Activated CD4-positive, alpha-beta T cell treated with anti-CD3 and anti-CD28 coated beads for 36 hours (primary cell): ENCODE measurements at regions of chr12 and their contacts with region 1.

Region 1: DNA sequence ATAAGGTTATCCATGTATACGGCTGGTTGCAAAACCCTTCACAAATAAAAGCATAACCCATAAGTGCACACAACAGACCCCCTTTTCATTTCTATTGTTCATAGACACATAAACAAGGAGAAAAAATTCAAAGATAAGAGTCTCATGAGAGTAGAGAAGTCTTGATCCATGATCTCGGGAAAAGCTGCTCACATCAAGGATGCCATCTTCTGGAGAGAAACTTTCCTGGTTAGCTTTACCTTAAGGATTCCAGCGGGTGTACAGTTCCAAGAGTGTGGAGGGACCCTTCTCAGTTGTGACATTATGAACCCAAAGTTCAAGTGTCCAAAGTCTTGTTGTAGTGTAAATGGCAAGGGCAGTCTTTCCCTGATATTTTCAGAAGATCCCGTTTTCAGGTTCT is 144.5 kb downstream of the LLPH start:
- DNase-seq: no peak
- ATAC-seq: no peak
- H3K4me3 Mint-ChIP-seq: no peak overlapping the region
- H3K27ac Mint-ChIP-seq: no peak overlapping the region
- H3K4me1 Mint-ChIP-seq: no peaks in the 10 kb centered on the region
- H3K27me3 Mint-ChIP-seq: peaks cover 5% of the 10 kb centered on the region

Region 2: DNA sequence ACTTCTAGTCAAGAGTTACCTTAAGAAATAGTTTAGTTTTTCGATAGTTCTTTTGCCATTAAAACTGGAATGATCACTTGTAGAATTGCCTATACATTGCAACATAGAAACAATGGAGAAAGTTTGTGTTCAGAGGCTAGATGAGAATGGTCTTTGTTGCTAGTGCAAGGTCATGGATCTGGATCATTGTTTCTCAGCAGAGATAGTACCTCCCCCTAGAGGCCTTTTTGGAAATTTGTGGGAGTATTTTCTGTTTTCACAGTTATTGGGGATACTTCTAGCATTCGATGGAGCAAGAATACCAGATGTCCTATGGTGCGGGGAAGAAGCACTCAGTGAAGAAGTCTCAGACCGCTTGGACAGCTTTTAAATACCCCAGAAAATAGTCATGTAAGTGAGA is 300.5 kb before region 1 on chr12:
- CTCF ChIA-PET with region 1: no interaction called
- POLR2A ChIA-PET with region 1: no interaction called
- intact Hi-C with region 1: no loop called
- DNase-seq: no peak
- ATAC-seq: no peak
- H3K4me3 Mint-ChIP-seq: no peak overlapping the region
- H3K27ac Mint-ChIP-seq: no peak overlapping the region
- H3K4me1 Mint-ChIP-seq: no peaks in the 10 kb centered on the region
- H3K27me3 Mint-ChIP-seq: peaks cover 25% of the 10 kb centered on the region

Region 3: DNA sequence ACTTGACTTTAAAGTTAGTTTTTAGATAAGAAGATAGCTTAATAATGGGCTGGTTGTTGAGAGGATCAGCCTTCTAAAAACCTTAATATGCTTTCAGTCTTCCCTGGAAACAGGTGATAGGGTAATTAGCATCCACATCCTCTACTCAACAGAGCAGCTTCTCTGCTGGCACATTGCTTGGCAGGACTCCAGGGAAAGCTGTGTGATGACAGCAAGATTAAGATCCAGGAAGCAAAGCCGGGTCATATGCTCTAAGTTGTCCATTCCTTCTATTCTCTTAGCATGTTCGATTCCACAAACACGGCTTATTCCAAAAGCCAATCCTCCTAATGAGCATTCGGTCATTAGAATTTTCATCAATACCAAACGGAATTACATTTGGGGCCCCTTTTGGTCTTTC is 74.7 kb before region 1 on chr12:
- CTCF ChIA-PET with region 1: no interaction called
- POLR2A ChIA-PET with region 1: no interaction called
- intact Hi-C with region 1: loop called in 1 of 2 experiments (anchors 5 kb)
- DNase-seq: no peak
- ATAC-seq: no peak
- H3K4me3 Mint-ChIP-seq: no peak overlapping the region
- H3K27ac Mint-ChIP-seq: no peak overlapping the region
- H3K4me1 Mint-ChIP-seq: no peaks in the 10 kb centered on the region
- H3K27me3 Mint-ChIP-seq: peaks cover 16% of the 10 kb centered on the region

Region 4: DNA sequence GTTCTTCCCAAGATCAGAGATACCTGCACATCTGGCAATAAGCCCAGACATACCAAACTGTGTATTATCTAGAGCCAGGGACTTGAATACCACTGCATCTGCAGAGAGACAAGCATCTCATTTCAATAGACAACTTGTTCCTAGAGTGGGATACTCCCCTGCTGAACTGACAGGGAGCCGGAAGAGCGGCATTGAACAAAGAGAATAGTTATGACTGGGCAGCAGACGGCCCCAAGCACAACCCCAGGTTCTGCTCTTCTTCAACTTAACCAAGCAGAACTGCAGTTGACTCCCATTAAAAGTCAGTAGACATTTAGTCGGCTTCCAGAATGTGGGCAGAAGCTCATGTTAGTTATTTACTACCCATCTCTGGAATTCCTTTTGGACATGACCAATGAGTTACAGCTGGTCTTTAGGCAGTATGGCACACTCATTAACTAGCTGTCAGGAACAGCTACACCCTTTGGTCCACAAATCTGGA is 48.8 kb before region 1 on chr12:
- CTCF ChIA-PET with region 1: no interaction called
- POLR2A ChIA-PET with region 1: no interaction called
- intact Hi-C with region 1: no loop called
- DNase-seq: no peak
- ATAC-seq: no peak
- H3K4me3 Mint-ChIP-seq: no peak overlapping the region
- H3K27ac Mint-ChIP-seq: no peak overlapping the region
- H3K4me1 Mint-ChIP-seq: no peaks in the 10 kb centered on the region
- H3K27me3 Mint-ChIP-seq: peaks cover 8% of the 10 kb centered on the region

Region 5: DNA sequence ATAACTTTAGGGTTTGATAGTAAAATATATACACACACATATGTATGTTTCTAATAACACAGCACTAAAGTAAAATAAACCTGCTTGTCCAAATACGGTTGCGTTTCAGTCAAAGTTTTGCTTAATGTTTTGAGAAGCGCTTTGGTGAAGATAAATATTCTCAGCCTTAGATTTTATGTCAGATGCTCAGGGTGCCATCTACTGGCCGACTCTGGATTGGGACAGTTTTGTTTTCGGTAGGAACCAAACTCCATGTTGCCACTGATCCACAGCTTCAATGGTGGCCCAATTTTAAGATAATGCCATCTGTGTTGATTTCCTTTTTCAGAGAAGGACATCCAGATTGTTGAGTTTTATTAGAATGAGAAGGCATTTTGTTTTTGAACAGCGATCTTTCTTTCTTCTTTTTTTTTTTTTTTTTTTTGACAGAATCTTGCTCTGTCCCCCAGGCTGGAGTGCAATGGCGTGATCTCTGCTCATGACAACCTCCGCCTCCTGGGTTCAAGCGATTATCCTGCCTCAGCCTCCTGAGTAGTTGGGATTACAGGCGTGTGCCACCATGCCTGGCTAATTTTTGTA is 101.4 kb after region 1 on chr12:
- CTCF ChIA-PET with region 1: no interaction called
- POLR2A ChIA-PET with region 1: no interaction called
- intact Hi-C with region 1: loop called in 1 of 2 experiments (anchors 5 kb)
- DNase-seq: peak; percentile 76
- ATAC-seq: peak; percentile 60
- H3K4me3 Mint-ChIP-seq: no peak overlapping the region
- H3K27ac Mint-ChIP-seq: no peak overlapping the region
- H3K4me1 Mint-ChIP-seq: no peaks in the 10 kb centered on the region
- H3K27me3 Mint-ChIP-seq: peaks cover 15% of the 10 kb centered on the region